A549 (cell line): ENCODE measurements at regions of chr2 and their contacts with region 1.

Region 1: GRCh38 chr2:223101340-223102039 is 49.5 kb downstream of the KCNE4 start:
- DNase-seq: peak; percentile 52 to 63
- ATAC-seq: peak; percentile 90 to 97
- H3K4me3 ChIP-seq: no peak overlapping the region
- H3K27ac ChIP-seq: peak overlapping the region; percentile 34 to 40; a peak in 5 of 6 replicates
- H3K4me1 ChIP-seq: no peaks in the 10 kb centered on the region; the same call in 2 of the 3 replicates
- CTCF ChIP-seq: peak; percentile 68
- EP300 ChIP-seq: no peak
- POLR2A ChIP-seq: no peak
- RAD21 ChIP-seq: peak; percentile 73 to 78

Region 2: GRCh38 chr2:222854773-222855700 is 246.5 kb before region 1 on chr2:
- CTCF ChIA-PET with region 1: no interaction called
- POLR2A ChIA-PET with region 1: no interaction called
- DNase-seq: no peak
- ATAC-seq: no peak
- H3K4me3 ChIP-seq: no peak overlapping the region
- H3K27ac ChIP-seq: no peak overlapping the region
- H3K4me1 ChIP-seq: peaks cover 9% of the 10 kb centered on the region
- CTCF ChIP-seq: no peak
- EP300 ChIP-seq: no peak
- POLR2A ChIP-seq: no peak
- RAD21 ChIP-seq: no peak

Region 3: GRCh38 chr2:222982010-222982908 is 119.2 kb before region 1 on chr2:
- CTCF ChIA-PET with region 1: interaction called, 41 read pairs
- POLR2A ChIA-PET with region 1: no interaction called
- DNase-seq: peak in 1 of 2 experiments; percentile 84
- ATAC-seq: peak; percentile 92 to 96
- H3K4me3 ChIP-seq: no peak overlapping the region
- H3K27ac ChIP-seq: peak overlapping the region; percentile 57 to 82
- H3K4me1 ChIP-seq: peaks cover 9% of the 10 kb centered on the region; the same call in 2 of the 3 replicates
- CTCF ChIP-seq: peak; percentile 68
- EP300 ChIP-seq: peak; percentile 11 to 24; a peak in 2 of 5 replicates
- POLR2A ChIP-seq: no peak
- RAD21 ChIP-seq: peak; percentile 80 to 89

Region 4: GRCh38 chr2:223090039-223090438 is 11.5 kb before region 1 on chr2:
- CTCF ChIA-PET with region 1: interaction called, 18 read pairs
- POLR2A ChIA-PET with region 1: no interaction called
- DNase-seq: no peak
- ATAC-seq: no peak
- H3K4me3 ChIP-seq: no peak overlapping the region
- H3K27ac ChIP-seq: no peak overlapping the region
- H3K4me1 ChIP-seq: no peaks in the 10 kb centered on the region
- CTCF ChIP-seq: no peak
- EP300 ChIP-seq: no peak
- POLR2A ChIP-seq: no peak
- RAD21 ChIP-seq: no peak